ENCODE measurements at regions of chr19 and their contacts with region 1.

Region 1: DNA sequence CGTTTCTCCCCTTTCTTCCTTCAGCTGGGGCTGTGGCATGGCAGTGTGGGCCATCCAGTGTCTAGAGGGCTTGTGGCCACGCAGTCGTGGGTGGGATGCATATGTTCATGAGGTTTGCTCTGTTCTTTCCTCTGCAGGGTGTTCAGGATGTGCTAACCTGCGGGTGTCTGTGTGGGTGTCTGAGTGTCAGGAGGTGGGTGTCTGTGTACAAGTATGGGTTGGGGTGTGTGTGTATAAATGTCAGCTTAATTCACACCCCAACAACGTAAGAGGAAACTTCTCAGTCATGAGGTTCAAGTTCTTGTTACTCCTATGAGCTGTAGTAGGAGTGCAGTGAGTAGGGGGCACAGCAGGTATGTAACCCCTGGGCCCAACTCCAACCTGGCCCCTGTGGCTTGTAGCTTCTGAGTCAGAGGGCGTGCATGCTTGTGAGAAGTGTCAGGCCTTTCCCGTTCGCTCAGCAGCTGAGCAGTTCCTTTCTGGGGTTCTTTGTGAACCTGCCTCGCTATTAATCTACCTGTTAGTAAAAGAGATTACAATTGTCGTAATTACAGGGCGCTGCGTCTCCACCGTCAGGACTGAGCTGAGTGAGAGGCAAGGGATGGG is 49.1 kb downstream of the NFIX start:
- DNase-seq: peak; percentile 56
- ATAC-seq: peak; percentile 73
- H3K4me3 ChIP-seq: no peak overlapping the region
- H3K27ac ChIP-seq: 0 out of 2 replicates have a peak overlapping the region, but pooled peaks have one; percentile 14
- H3K4me1 ChIP-seq: peaks cover 13% of the 10 kb centered on the region
- H3K27me3 ChIP-seq: no peaks in the 10 kb centered on the region
- CTCF ChIP-seq: no peak

Region 2: DNA sequence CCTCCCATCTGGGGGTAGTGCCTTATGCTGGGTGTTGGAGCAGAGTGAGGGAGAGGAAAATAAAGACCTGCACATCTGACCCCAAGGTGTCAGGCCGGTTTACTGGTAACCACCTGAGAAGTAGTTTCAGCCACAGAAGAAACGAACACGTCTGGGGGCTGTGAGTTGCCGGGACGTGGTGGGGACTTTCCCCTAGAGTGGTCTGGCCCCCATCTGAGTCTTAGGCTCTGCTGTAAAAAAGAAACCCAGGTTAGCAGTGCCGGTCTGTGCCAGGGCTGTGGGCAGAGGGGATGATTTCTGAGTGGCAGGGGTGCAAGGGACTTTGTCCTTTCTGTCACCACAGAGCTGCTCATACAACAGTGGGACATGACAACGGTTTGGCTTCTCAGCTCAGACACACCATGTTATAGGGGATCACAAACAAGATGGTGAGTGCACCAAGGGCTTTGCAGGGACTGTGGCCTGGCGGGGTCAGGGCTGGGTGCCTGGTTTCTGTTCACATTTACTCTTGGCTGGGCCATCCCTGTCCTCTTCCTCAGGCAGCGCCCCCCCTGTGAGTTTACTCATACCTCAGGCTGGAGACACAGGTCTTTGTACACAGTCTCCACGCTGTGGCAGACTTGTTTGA is 144.3 kb before region 1 on chr19:
- CTCF ChIA-PET with region 1: no interaction called
- POLR2A ChIA-PET with region 1: interaction called, 20 read pairs
- intact Hi-C with region 1: no loop called
- DNase-seq: no peak
- ATAC-seq: no peak
- H3K4me3 ChIP-seq: no peak overlapping the region
- H3K27ac ChIP-seq: no peak overlapping the region
- H3K4me1 ChIP-seq: no peaks in the 10 kb centered on the region
- H3K27me3 ChIP-seq: no peaks in the 10 kb centered on the region
- CTCF ChIP-seq: no peak